ENCODE measurements at regions of chr5 and their contacts with region 1.

Region 1: DNA sequence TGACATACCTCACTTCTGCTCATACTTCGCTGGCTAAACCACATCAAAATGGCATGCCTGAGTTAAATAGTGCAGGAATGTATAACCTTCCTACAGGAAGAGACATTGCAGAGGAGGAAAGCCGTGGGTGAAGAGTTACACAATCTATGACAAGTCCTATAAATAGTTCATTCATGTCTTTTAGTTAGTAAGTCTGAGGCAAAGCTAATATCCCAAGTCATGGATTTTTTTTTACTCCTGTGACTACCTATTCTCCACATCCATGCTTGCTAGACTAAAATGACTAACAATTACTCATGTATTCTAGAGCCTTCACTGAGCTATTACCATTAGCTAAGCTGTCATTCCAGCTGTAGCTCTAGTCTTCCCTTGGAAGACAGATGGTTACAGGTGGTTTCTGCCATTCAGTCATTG is 391.3 kb downstream of the NR2F1-AS1 start:
- DNase-seq: peak; percentile 97
- ATAC-seq: peak; percentile 66
- H3K4me3 ChIP-seq: no peak overlapping the region
- H3K27ac ChIP-seq: peak overlapping the region; percentile 88
- H3K4me1 ChIP-seq: peaks cover 66% of the 10 kb centered on the region
- H3K27me3 ChIP-seq: no peaks in the 10 kb centered on the region
- CTCF ChIP-seq: no peak

Region 2: DNA sequence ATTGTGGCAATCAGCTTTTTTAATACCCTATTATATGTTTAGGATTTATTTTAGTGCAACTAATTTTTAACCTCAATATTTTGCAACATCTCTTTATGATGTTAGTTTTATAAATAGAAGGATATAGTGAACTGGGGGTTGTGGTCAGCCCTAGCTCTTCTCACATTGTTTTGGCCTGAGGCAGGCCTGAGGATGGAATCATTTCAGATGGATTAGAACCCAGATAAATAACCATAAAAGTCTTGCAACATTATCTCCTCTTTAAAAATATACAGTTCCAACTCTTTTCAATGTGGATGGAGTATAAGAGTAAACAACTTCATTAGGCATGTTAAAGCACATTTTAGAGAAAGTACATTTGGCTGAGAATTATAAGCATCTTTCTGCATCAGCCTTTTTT is 131.4 kb before region 1 on chr5:
- CTCF ChIA-PET with region 1: no interaction called
- POLR2A ChIA-PET with region 1: no interaction called
- intact Hi-C with region 1: loop called (anchors 5 kb)
- DNase-seq: peak; percentile 81
- ATAC-seq: peak; percentile 70
- H3K4me3 ChIP-seq: no peak overlapping the region
- H3K27ac ChIP-seq: peak overlapping the region; percentile 45
- H3K4me1 ChIP-seq: peaks cover 45% of the 10 kb centered on the region
- H3K27me3 ChIP-seq: no peaks in the 10 kb centered on the region
- CTCF ChIP-seq: no peak

Region 3: GRCh38 chr5:93126634-93127033 is 63.1 kb before region 1 on chr5:
- CTCF ChIA-PET with region 1: no interaction called
- POLR2A ChIA-PET with region 1: no interaction called
- intact Hi-C with region 1: no loop called
- DNase-seq: peak; percentile 86
- ATAC-seq: peak; percentile 83
- H3K4me3 ChIP-seq: no peak overlapping the region
- H3K27ac ChIP-seq: peak overlapping the region; percentile 65
- H3K4me1 ChIP-seq: peaks cover 25% of the 10 kb centered on the region
- H3K27me3 ChIP-seq: no peaks in the 10 kb centered on the region
- CTCF ChIP-seq: no peak

Region 4: GRCh38 chr5:93151121-93151520 is 38.6 kb before region 1 on chr5:
- CTCF ChIA-PET with region 1: no interaction called
- POLR2A ChIA-PET with region 1: no interaction called
- intact Hi-C with region 1: loop called (anchors 1 kb)
- DNase-seq: peak; percentile 85
- ATAC-seq: peak; percentile 75
- H3K4me3 ChIP-seq: 0 out of 2 replicates have a peak overlapping the region, but pooled peaks have one; percentile 37
- H3K27ac ChIP-seq: peak overlapping the region; percentile 70
- H3K4me1 ChIP-seq: peaks cover 30% of the 10 kb centered on the region
- H3K27me3 ChIP-seq: no peaks in the 10 kb centered on the region
- CTCF ChIP-seq: no peak

Region 5: GRCh38 chr5:93208141-93208751 is 18.5 kb after region 1 on chr5:
- CTCF ChIA-PET with region 1: no interaction called
- POLR2A ChIA-PET with region 1: no interaction called
- intact Hi-C with region 1: no loop called
- DNase-seq: no peak
- ATAC-seq: no peak
- H3K4me3 ChIP-seq: no peak overlapping the region
- H3K27ac ChIP-seq: no peak overlapping the region
- H3K4me1 ChIP-seq: no peaks in the 10 kb centered on the region
- H3K27me3 ChIP-seq: no peaks in the 10 kb centered on the region
- CTCF ChIP-seq: no peak

Region 6: DNA sequence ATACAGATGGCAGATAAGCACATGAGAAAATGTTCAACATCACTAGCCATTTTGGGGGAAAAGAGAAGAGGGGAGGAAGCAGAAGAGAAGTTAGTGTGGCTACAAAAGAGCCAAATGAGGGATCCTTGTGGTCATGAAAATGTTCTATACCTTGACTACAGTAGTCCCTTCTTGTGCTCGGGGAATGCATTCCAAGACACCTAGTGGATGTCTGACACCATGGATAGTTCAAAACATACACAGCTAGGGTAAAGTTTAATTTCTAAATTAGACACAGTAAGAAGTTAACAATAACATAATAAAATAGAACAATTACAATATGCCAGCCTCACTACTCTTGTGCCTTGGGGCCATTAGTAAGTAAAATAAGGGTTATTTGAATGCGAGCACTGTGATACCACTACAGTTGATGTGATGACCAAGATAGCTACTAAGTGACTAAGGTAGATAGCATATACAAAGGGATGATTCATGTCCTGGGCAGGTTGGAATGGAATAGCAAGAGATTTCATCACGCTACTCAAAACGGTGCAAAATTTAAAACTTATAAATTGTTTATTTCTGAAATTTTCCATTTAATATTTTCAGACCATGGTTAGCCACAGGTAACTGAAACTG is 47.2 kb after region 1 on chr5:
- CTCF ChIA-PET with region 1: no interaction called
- POLR2A ChIA-PET with region 1: interaction called, 8 read pairs
- intact Hi-C with region 1: loop called (anchors 2 kb)
- DNase-seq: peak; percentile 90
- ATAC-seq: peak; percentile 90
- H3K4me3 ChIP-seq: no peak overlapping the region
- H3K27ac ChIP-seq: peak overlapping the region; percentile 73
- H3K4me1 ChIP-seq: peaks cover 45% of the 10 kb centered on the region
- H3K27me3 ChIP-seq: no peaks in the 10 kb centered on the region
- CTCF ChIP-seq: peak; percentile 35; the same call in 1 of the 2 replicates

Region 7: DNA sequence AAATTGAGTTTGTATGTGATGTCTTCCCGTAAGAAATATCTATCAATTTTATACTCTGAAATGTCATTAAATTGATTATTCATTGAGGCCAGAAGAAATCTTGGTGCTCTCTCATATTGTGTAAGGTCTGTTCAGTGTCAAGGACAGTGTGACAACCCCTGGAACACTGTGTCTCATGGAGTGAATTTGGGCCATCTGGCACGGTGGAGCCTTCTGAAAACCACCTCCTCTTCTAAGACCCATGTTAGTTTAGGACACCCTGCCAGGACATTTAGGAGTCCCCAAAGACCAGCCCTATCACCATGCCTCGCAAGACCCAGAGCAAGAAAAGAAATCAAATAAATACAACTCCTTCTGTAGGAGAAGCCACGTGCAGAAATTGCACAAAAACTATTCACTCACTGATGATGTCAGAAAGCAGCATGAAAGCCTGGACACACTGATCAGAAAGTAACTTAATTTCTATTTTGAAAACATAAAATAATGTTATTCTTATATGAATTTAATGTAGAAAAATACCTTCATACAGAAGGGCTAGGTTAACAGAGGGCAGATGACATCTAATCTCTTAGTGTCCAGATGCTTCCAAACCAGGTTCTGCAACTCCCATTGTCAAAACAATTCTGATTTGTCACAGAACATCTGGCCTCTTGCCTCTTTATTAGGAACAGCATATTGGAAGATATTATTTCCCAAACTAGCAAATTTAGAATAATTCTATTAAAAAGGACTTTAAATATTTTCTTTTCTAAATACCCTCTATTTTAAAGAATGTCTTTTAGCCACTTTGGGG is 92.5 kb after region 1 on chr5:
- CTCF ChIA-PET with region 1: no interaction called
- POLR2A ChIA-PET with region 1: no interaction called
- intact Hi-C with region 1: no loop called
- DNase-seq: no peak
- ATAC-seq: no peak
- H3K4me3 ChIP-seq: no peak overlapping the region
- H3K27ac ChIP-seq: no peak overlapping the region
- H3K4me1 ChIP-seq: peaks cover 48% of the 10 kb centered on the region
- H3K27me3 ChIP-seq: no peaks in the 10 kb centered on the region
- CTCF ChIP-seq: no peak